K562 (cell line): ENCODE measurements at regions of chr1 and their contacts with region 1.

Region 1: DNA sequence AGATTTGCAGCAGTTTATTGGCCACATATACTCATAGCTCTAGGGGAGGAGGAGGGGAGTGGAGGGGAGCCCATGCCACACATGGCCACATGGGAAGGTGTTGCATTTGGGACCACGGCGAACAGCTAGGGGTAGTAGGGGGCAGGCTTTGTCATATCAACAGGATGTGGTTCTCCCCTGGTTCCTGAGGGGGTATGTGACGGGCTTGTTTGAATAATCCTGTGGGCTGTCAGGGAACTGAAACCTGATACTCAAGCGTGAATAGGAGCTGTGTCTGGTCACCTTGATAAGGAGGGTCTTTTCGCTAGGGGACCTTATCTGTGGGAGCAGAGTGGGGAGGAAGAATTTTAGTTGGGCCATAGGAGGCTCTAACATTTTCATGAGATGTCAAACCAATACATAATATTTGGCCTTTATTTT is 264.7 kb downstream of the CTH start:
- DNase-seq: peak; percentile 70 to 97 (median 83)
- ATAC-seq: peak; percentile 94
- H3K4me3 ChIP-seq: no peak overlapping the region
- H3K27ac ChIP-seq: peak overlapping the region; percentile 78
- H3K4me1 ChIP-seq: peaks cover 4 to 32% of the 10 kb centered on the region in 2 experiments; a peak in 4 of 5 replicates
- H3K27me3 ChIP-seq: no peaks in the 10 kb centered on the region
- CTCF ChIP-seq: peak in 2 of 3 experiments; percentile 23 to 56; a peak in 2 of 6 replicates
- EP300 ChIP-seq: peak; percentile 98
- POLR2A ChIP-seq: no peak; the same call in 1 of the 2 replicates
- RAD21 ChIP-seq: peak; percentile 17 to 25; a peak in 3 of 4 replicates

Region 2: GRCh38 chr1:70239940-70240339 is 435.8 kb before region 1 on chr1:
- CTCF ChIA-PET with region 1: no interaction called
- POLR2A ChIA-PET with region 1: no interaction called
- in situ Hi-C with region 1: no loop called
- intact Hi-C with region 1: no loop called
- DNase-seq: no peak
- ATAC-seq: no peak
- H3K4me3 ChIP-seq: no peak overlapping the region
- H3K27ac ChIP-seq: no peak overlapping the region
- H3K4me1 ChIP-seq: no peaks in the 10 kb centered on the region
- H3K27me3 ChIP-seq: no peaks in the 10 kb centered on the region
- CTCF ChIP-seq: no peak
- EP300 ChIP-seq: no peak
- POLR2A ChIP-seq: no peak
- RAD21 ChIP-seq: no peak

Region 3: GRCh38 chr1:70627910-70628309 is 47.8 kb before region 1 on chr1:
- CTCF ChIA-PET with region 1: no interaction called
- POLR2A ChIA-PET with region 1: no interaction called
- in situ Hi-C with region 1: no loop called
- intact Hi-C with region 1: loop called (anchors 2 kb)
- DNase-seq: no peak
- ATAC-seq: no peak
- H3K4me3 ChIP-seq: no peak overlapping the region
- H3K27ac ChIP-seq: no peak overlapping the region
- H3K4me1 ChIP-seq: no peaks in the 10 kb centered on the region
- H3K27me3 ChIP-seq: no peaks in the 10 kb centered on the region
- CTCF ChIP-seq: no peak
- EP300 ChIP-seq: no peak
- POLR2A ChIP-seq: no peak
- RAD21 ChIP-seq: no peak

Region 4: DNA sequence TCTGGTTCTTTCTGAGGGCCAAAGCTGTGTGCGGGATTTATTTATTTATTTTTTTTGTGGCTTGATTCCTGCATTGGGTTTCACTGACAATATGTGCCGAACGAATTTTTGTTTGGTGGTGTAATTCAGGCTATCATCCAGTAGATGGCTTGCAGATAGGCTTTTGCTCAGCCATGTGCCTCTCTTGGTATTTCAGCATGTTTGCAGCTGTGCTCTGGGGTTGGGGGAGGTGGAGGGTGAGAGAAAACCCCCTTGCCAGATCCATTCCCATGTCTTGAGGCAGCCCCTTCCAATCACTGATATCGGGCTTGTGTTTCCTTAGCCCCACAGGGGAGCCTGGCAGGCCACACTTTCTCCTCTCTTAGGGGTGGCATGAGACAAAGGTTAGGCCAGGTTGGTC is 69.5 kb after region 1 on chr1:
- CTCF ChIA-PET with region 1: no interaction called
- POLR2A ChIA-PET with region 1: no interaction called
- in situ Hi-C with region 1: no loop called
- intact Hi-C with region 1: loop called (anchors 2 kb)
- DNase-seq: peak in 1 of 4 experiments; percentile 29
- ATAC-seq: peak; percentile 63
- H3K4me3 ChIP-seq: no peak overlapping the region
- H3K27ac ChIP-seq: no peak overlapping the region
- H3K4me1 ChIP-seq: no peaks in the 10 kb centered on the region
- H3K27me3 ChIP-seq: no peaks in the 10 kb centered on the region
- CTCF ChIP-seq: peak in 2 of 3 experiments; percentile 15 to 32; a peak in 2 of 6 replicates
- EP300 ChIP-seq: no peak
- POLR2A ChIP-seq: no peak
- RAD21 ChIP-seq: 0 out of 4 replicates have a peak, but pooled peaks of 1 of the 2 experiments have one; percentile 36